Caco-2 (cell line): ENCODE measurements at regions of chr19 and their contacts with region 1.

Region 1: GRCh38 chr19:2168619-2169424 is 5.1 kb downstream of the DOT1L start:
- DNase-seq: peak; percentile 94 to 95
- H3K4me3 ChIP-seq: no peak overlapping the region
- H3K4me3 Mint-ChIP-seq: peak overlapping the region; percentile 59
- H3K27ac Mint-ChIP-seq: peak overlapping the region; percentile 92
- H3K4me1 ChIP-seq: peaks cover 69% of the 10 kb centered on the region
- H3K4me1 Mint-ChIP-seq: peaks cover 10% of the 10 kb centered on the region
- H3K27me3 ChIP-seq: no peaks in the 10 kb centered on the region
- H3K27me3 Mint-ChIP-seq: no peaks in the 10 kb centered on the region
- CTCF ChIP-seq: no peak

Region 2: DNA sequence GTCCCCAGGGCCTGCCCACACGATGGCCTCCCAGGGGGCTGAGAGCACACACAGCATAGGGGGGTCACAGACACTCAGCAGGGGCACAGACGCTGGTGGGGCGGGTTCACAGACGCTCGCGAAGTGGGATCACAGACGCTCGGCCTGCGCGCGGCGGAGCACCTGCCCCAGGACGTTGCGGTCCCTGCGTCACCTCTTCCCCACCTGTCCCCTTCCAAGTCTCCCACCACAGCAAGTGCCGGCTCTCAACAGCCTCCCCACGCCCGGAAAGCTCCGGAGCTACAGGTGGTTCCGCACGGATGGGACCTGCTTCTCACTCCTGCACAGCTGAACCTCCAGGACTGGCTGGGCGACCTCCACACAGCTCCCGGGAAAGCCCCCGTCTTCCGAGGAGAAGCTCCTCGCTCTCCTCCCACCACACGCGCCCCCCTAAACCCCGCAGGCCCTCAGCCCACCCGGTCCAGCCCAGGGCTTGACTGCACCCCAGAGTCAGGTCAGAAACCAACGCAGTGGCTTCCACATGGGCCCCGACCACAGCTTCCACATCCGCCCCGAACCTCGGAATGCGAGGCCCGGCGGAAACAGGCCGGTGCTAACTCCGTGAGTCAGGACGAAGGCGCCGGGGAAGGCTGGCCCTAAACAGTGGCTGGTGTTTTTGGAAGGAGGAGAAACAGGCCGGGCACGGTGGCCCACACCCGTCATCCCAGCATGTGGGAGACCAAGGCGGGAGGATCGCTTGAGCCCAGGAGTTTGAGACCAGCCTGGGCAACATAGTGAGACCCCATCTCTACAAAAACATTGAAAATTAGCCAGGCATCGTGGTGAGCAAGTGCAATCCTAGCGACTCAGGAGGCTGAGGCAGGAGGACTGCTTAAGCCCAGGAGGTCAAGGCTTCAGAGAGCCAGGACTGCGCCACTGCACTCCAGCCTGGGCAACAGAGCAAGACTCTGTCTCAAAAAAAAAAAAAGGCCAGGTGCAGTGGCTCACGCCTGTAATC is 169.8 kb before region 1 on chr19:
- CTCF ChIA-PET with region 1: no interaction called
- POLR2A ChIA-PET with region 1: no interaction called
- intact Hi-C with region 1: no loop called
- DNase-seq: no peak
- H3K4me3 ChIP-seq: no peak overlapping the region
- H3K4me3 Mint-ChIP-seq: no peak overlapping the region
- H3K27ac Mint-ChIP-seq: no peak overlapping the region
- H3K4me1 ChIP-seq: no peaks in the 10 kb centered on the region
- H3K4me1 Mint-ChIP-seq: no peaks in the 10 kb centered on the region
- H3K27me3 ChIP-seq: no peaks in the 10 kb centered on the region
- H3K27me3 Mint-ChIP-seq: no peaks in the 10 kb centered on the region
- CTCF ChIP-seq: no peak

Region 3: DNA sequence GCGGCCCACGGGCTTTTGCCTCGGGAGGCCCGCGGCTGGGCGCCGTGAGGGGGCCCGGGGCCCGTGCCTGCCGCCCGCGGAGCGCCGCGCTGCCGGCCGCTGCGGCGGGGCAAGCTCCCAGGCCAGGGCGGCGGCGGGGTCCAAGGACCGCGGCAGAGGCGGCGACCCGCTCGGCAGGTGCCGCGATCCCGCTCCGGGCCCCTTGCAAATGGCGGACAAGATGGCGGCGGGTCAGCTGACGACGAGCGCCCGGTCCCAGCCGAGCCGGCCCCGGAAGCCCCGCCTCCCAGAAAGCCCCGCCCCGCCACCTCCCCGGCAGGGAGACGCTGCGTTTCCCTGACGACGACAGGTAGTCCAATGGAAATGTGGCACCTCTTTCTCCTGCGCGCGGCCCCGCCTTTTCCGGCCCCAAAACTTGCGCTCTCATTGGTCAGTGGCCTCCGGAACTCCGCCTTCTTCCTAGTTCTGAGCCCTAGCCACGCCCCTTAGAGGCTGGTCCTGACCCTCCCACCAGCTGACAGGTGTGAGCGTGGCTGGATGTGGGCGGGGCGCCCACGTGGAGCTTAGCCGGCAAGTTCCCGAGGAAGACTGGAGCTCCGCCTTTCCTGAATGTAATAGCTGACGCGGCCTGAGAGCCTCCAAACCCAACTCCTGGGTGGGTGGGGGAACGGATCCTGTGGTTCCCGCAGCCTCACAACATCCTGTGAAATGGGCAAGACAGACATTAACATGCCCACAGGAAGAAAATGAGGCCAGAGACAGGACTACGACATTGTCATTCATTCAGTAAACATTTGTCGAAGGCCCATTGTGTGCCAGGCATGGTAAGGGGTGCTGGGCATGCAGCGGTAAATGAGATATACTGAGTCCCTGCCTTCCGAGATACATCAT is 17.2 kb before region 1 on chr19 and contains the start of gene AP3D1:
- CTCF ChIA-PET with region 1: interaction called, 24 read pairs
- POLR2A ChIA-PET with region 1: no interaction called
- intact Hi-C with region 1: no loop called
- DNase-seq: peak; percentile 99
- H3K4me3 ChIP-seq: peak within 1 kb of the TSS; percentile 83
- H3K4me3 Mint-ChIP-seq: peak within 1 kb of the TSS; percentile 78
- H3K27ac Mint-ChIP-seq: peak within 1 kb of the TSS; percentile 79
- H3K4me1 ChIP-seq: peaks cover 24% of the 10 kb centered on the region
- H3K4me1 Mint-ChIP-seq: peaks cover 7% of the 10 kb centered on the region
- H3K27me3 ChIP-seq: no peaks in the 10 kb centered on the region
- H3K27me3 Mint-ChIP-seq: no peaks in the 10 kb centered on the region
- CTCF ChIP-seq: no peak
- total RNA-seq, gene AP3D1: 150 and 151 TPM in 2 replicates

Region 4: GRCh38 chr19:2213799-2214198 is 45.0 kb after region 1 on chr19:
- CTCF ChIA-PET with region 1: no interaction called
- POLR2A ChIA-PET with region 1: interaction called, 7 read pairs
- intact Hi-C with region 1: loop called (anchors 10 kb)
- DNase-seq: no peak
- H3K4me3 ChIP-seq: no peak overlapping the region
- H3K4me3 Mint-ChIP-seq: no peak overlapping the region
- H3K27ac Mint-ChIP-seq: peak overlapping the region; percentile 57
- H3K4me1 ChIP-seq: peaks cover 24% of the 10 kb centered on the region
- H3K4me1 Mint-ChIP-seq: peaks cover 6% of the 10 kb centered on the region
- H3K27me3 ChIP-seq: no peaks in the 10 kb centered on the region
- H3K27me3 Mint-ChIP-seq: no peaks in the 10 kb centered on the region
- CTCF ChIP-seq: no peak

Region 5: GRCh38 chr19:3893509-3894179 is 1724.8 kb after region 1 on chr19:
- CTCF ChIA-PET with region 1: no interaction called
- POLR2A ChIA-PET with region 1: interaction called, 13 read pairs
- intact Hi-C with region 1: no loop called
- DNase-seq: no peak
- H3K4me3 ChIP-seq: no peak overlapping the region
- H3K4me3 Mint-ChIP-seq: no peak overlapping the region
- H3K27ac Mint-ChIP-seq: no peak overlapping the region
- H3K4me1 ChIP-seq: no peaks in the 10 kb centered on the region
- H3K4me1 Mint-ChIP-seq: no peaks in the 10 kb centered on the region
- H3K27me3 ChIP-seq: no peaks in the 10 kb centered on the region
- H3K27me3 Mint-ChIP-seq: no peaks in the 10 kb centered on the region
- CTCF ChIP-seq: no peak